PC-9 (cell line): ENCODE measurements at regions of chr18 and their contacts with region 1.

Region 1: GRCh38 chr18:2111456-2111855 is 459.8 kb downstream of the METTL4 start:
- DNase-seq: peak; percentile 35 to 39
- H3K4me3 ChIP-seq: no peak overlapping the region
- H3K27ac ChIP-seq: no peak overlapping the region
- H3K4me1 ChIP-seq: peaks cover 25% of the 10 kb centered on the region
- H3K27me3 ChIP-seq: no peaks in the 10 kb centered on the region
- CTCF ChIP-seq: no peak

Region 2: GRCh38 chr18:2127521-2127920 is 16.1 kb after region 1 on chr18:
- CTCF ChIA-PET with region 1: interaction called, 10 read pairs
- POLR2A ChIA-PET with region 1: interaction called, 4 read pairs
- intact Hi-C with region 1: loop called (anchors 2 kb)
- DNase-seq: no peak
- H3K4me3 ChIP-seq: no peak overlapping the region
- H3K27ac ChIP-seq: no peak overlapping the region
- H3K4me1 ChIP-seq: no peaks in the 10 kb centered on the region
- H3K27me3 ChIP-seq: no peaks in the 10 kb centered on the region
- CTCF ChIP-seq: no peak

Region 3: DNA sequence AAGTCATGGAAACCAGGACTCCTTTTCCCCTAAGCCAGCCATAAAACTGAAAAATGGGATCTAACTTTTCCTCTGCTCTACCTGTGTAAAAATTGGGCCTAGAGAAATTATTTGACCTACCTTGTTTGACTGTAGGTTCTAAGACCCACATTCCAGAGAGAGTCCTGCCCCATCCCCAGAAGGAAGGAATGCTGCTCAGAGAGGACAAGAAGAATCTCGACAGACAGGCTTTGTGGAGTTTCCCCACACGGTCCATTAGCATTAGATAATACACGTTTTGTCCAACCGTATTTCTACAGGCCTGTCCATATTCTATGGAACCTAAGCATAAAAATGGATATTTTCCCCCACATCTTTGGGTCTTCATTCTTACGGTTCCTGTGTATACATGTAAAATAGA is 56.6 kb after region 1 on chr18:
- CTCF ChIA-PET with region 1: no interaction called
- POLR2A ChIA-PET with region 1: no interaction called
- intact Hi-C with region 1: loop called (anchors 1 kb)
- DNase-seq: peak in 1 of 2 experiments; percentile 61
- H3K4me3 ChIP-seq: no peak overlapping the region
- H3K27ac ChIP-seq: no peak overlapping the region
- H3K4me1 ChIP-seq: peaks cover 29% of the 10 kb centered on the region
- H3K27me3 ChIP-seq: no peaks in the 10 kb centered on the region
- CTCF ChIP-seq: no peak

Region 4: GRCh38 chr18:2173464-2173863 is 62.0 kb after region 1 on chr18:
- CTCF ChIA-PET with region 1: no interaction called
- POLR2A ChIA-PET with region 1: interaction called, 3 read pairs
- intact Hi-C with region 1: loop called (anchors 1 kb)
- DNase-seq: peak; percentile 53 to 73
- H3K4me3 ChIP-seq: no peak overlapping the region
- H3K27ac ChIP-seq: no peak overlapping the region
- H3K4me1 ChIP-seq: peaks cover 26% of the 10 kb centered on the region
- H3K27me3 ChIP-seq: no peaks in the 10 kb centered on the region
- CTCF ChIP-seq: no peak

Region 5: DNA sequence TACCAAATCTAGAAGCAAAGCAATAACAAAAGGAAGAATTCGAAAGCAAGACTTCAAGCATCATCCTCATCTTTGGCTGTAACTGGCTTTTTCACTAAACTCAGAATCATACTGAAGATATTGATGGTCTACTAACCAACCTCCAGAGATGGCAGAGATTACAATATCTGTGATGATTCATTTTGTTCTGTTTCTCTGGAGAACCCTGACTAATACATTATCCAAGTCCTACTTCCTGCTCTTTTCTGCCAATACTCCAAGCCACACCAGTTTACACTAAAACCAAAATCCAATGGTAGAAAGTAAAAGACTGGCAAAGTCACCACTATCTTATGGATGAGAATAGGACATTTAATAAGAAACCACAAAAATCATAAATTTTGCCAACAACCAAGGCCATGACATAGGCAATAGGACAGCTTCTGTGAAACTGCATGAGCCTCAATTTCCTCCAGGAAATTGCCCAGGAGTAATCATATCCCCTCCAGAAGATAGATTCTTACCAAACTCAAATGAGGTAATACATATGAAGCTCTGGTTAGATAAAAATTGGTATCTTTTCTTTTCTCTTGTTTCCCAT is 300.0 kb after region 1 on chr18:
- CTCF ChIA-PET with region 1: no interaction called
- POLR2A ChIA-PET with region 1: no interaction called
- intact Hi-C with region 1: loop called (anchors 10 kb)
- DNase-seq: peak; percentile 12 to 75
- H3K4me3 ChIP-seq: no peak overlapping the region; the same call in 1 of the 2 replicates
- H3K27ac ChIP-seq: peak overlapping the region; percentile 70
- H3K4me1 ChIP-seq: peaks cover 34% of the 10 kb centered on the region
- H3K27me3 ChIP-seq: no peaks in the 10 kb centered on the region
- CTCF ChIP-seq: no peak